Panc1 (cell line): ENCODE measurements at regions of chr18 and their contacts with region 1.

Region 1: GRCh38 chr18:54269893-54270844 is 852 bp downstream of the POLI start:
- DNase-seq: no peak
- ATAC-seq: peak; percentile 85
- H3K4me3 ChIP-seq: peak overlapping the region; percentile 65 to 87
- H3K27ac ChIP-seq: peak overlapping the region; percentile 87
- H3K4me1 ChIP-seq: peaks cover 4% of the 10 kb centered on the region
- H3K27me3 ChIP-seq: no peaks in the 10 kb centered on the region
- CTCF ChIP-seq: peak; percentile 28; the same call in 1 of the 2 replicates

Region 2: GRCh38 chr18:53991805-53992204 is 278.4 kb before region 1 on chr18:
- CTCF ChIA-PET with region 1: no interaction called
- POLR2A ChIA-PET with region 1: no interaction called
- in situ Hi-C with region 1: no loop called
- intact Hi-C with region 1: no loop called
- DNase-seq: no peak
- ATAC-seq: no peak
- H3K4me3 ChIP-seq: no peak overlapping the region
- H3K27ac ChIP-seq: no peak overlapping the region
- H3K4me1 ChIP-seq: no peaks in the 10 kb centered on the region
- H3K27me3 ChIP-seq: no peaks in the 10 kb centered on the region
- CTCF ChIP-seq: no peak

Region 3: GRCh38 chr18:54357660-54358494 is 87.7 kb after region 1 on chr18 and contains the starts of genes C18orf54 and STARD6:
- CTCF ChIA-PET with region 1: no interaction called
- POLR2A ChIA-PET with region 1: no interaction called
- in situ Hi-C with region 1: no loop called
- intact Hi-C with region 1: loop called (anchors 10 kb)
- DNase-seq: peak; percentile 42
- ATAC-seq: peak; percentile 96
- H3K4me3 ChIP-seq: peak within 1 kb of the TSS; percentile 72 to 94
- H3K27ac ChIP-seq: peak within 1 kb of the TSS; percentile 86
- H3K4me1 ChIP-seq: peaks cover 2% of the 10 kb centered on the region; the same call in 1 of the 2 replicates
- H3K27me3 ChIP-seq: no peaks in the 10 kb centered on the region
- CTCF ChIP-seq: peak; percentile 44
- total RNA-seq, gene C18orf54: 7.5 TPM
- total RNA-seq, gene STARD6: not detected

Region 4: GRCh38 chr18:54712306-54712705 is 442.1 kb after region 1 on chr18:
- CTCF ChIA-PET with region 1: no interaction called
- POLR2A ChIA-PET with region 1: no interaction called
- in situ Hi-C with region 1: no loop called
- intact Hi-C with region 1: no loop called
- DNase-seq: no peak
- ATAC-seq: 0 out of 2 replicates have a peak, but pooled peaks have one; percentile 38
- H3K4me3 ChIP-seq: no peak overlapping the region
- H3K27ac ChIP-seq: no peak overlapping the region
- H3K4me1 ChIP-seq: no peaks in the 10 kb centered on the region
- H3K27me3 ChIP-seq: no peaks in the 10 kb centered on the region
- CTCF ChIP-seq: no peak